A673 (cell line): ENCODE measurements at regions of chr19 and their contacts with region 1.

Region 1: DNA sequence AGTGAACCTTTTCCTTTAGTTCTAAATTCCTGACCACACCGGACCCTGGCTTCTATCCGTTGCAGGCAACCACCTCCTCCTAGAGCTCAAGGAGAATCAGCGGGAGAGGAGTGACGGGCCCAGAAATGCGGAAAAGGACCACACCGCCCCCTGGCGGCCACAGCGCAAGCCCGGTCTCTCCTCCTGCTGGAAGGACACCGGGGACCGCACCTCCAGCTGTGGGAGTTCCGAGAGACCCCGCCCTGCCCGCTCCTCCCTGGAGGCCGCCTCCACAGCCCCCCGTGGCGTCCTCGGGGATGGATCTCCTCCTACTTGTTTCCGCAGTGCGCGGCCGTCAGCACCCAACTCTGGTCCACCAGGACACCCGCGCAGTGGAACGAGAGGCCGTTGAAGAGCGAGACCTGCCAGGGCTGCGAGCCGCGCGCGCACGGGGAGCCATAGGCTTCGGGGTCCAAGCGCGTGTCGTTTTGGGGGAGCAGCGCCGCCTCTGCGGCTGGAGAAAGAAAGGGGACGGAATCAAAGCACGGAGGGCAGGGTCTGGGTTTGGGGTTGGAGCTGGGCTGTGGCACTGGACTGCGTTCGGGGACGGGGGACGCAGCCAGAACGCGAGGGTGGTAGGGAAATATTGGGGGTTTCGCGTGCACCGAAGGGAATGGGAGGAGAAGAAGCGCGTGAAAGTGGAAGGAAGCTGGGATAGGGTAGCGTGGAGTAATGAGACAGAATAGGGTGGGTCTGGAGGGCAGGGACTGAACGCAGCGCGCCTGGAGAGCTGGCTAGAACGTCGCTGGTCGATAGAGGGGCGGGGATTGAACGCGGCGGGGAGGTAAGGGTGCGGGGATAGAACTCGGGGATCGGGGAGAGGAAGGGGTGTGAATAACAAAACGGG is 2.5 kb downstream of the KLK10 start:
- DNase-seq: peak; percentile 85
- H3K4me3 ChIP-seq: peak overlapping the region; percentile 40
- H3K27ac ChIP-seq: no peak overlapping the region
- H3K4me1 ChIP-seq: peaks cover 7% of the 10 kb centered on the region
- H3K27me3 ChIP-seq: peaks cover 54% of the 10 kb centered on the region
- CTCF ChIP-seq: peak; percentile 92

Region 2: GRCh38 chr19:50931023-50931422 is 86.0 kb before region 1 on chr19:
- CTCF ChIA-PET with region 1: interaction called, 7 read pairs
- POLR2A ChIA-PET with region 1: no interaction called
- intact Hi-C with region 1: loop called (anchors 2 kb)
- DNase-seq: no peak
- H3K4me3 ChIP-seq: no peak overlapping the region
- H3K27ac ChIP-seq: no peak overlapping the region
- H3K4me1 ChIP-seq: no peaks in the 10 kb centered on the region
- H3K27me3 ChIP-seq: peaks cover 3% of the 10 kb centered on the region
- CTCF ChIP-seq: no peak

Region 3: GRCh38 chr19:51097166-51097738 is 80.2 kb after region 1 on chr19:
- CTCF ChIA-PET with region 1: interaction called, 10 read pairs
- POLR2A ChIA-PET with region 1: no interaction called
- intact Hi-C with region 1: loop called (anchors 1 kb)
- DNase-seq: peak; percentile 52
- H3K4me3 ChIP-seq: no peak overlapping the region
- H3K27ac ChIP-seq: no peak overlapping the region
- H3K4me1 ChIP-seq: no peaks in the 10 kb centered on the region
- H3K27me3 ChIP-seq: no peaks in the 10 kb centered on the region
- CTCF ChIP-seq: peak; percentile 68